ENCODE measurements at regions of chr12 and their contacts with region 1.

Region 1: GRCh38 chr12:100348657-100349454 is 8.0 kb upstream of the SLC17A8 start:
- DNase-seq: peak; percentile 39 to 59 (median 43)
- H3K4me3 ChIP-seq: no peak overlapping the region
- H3K27ac ChIP-seq: no peak overlapping the region
- H3K4me1 ChIP-seq: no peaks in the 10 kb centered on the region
- H3K27me3 ChIP-seq: no peaks in the 10 kb centered on the region

Region 2: DNA sequence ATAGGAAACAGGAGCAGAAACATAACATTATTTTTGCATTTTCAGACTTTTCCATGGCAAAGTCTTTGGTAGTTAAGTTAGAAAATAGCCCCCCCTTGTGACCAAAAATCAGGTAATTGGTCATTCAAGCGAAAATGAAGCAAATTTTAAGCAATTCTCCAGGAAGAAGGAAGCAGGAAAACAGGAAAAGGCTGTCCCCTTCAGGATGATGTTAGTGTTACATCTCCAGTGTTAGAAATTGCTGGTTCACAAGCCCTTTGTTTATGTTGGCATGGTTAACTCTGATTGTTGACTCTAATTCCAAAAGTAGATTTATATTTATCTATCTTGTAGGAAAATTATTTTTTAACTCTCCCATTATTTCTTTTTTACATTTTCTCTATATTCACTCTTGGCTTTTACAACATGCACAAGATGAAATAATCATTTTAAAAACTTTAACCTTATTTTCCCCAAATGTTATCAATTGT is 205.8 kb after region 1 on chr12:
- CTCF ChIA-PET with region 1: interaction called, 17 read pairs
- POLR2A ChIA-PET with region 1: no interaction called
- DNase-seq: peak; percentile 63 to 72 (median 72)
- H3K4me3 ChIP-seq: no peak overlapping the region
- H3K27ac ChIP-seq: no peak overlapping the region
- H3K4me1 ChIP-seq: no peaks in the 10 kb centered on the region
- H3K27me3 ChIP-seq: peaks cover 0 to 5% (median 0%) of the 10 kb centered on the region in 5 experiments

Region 3: GRCh38 chr12:100733817-100734593 is 385.1 kb after region 1 on chr12:
- CTCF ChIA-PET with region 1: interaction called, 19 read pairs
- POLR2A ChIA-PET with region 1: no interaction called
- DNase-seq: peak; percentile 14 to 36 (median 31)
- H3K4me3 ChIP-seq: no peak overlapping the region
- H3K27ac ChIP-seq: no peak overlapping the region
- H3K4me1 ChIP-seq: no peaks in the 10 kb centered on the region
- H3K27me3 ChIP-seq: peaks cover 0 to 23% (median 4%) of the 10 kb centered on the region in 5 experiments